CD4-positive, alpha-beta memory T cell (primary cell): ENCODE measurements at regions of chr3 and their contacts with region 1.

Region 1: GRCh38 chr3:36993326-36994283 is at the start of gene MLH1:
- DNase-seq: peak in 4 of 5 donors; percentile 94 to 96 (median 96)
- H3K4me3 ChIP-seq: peak within 1 kb of the TSS; percentile 64 to 97
- H3K4me3 Mint-ChIP-seq: no peak within 1 kb of the TSS
- H3K27ac ChIP-seq: peak within 1 kb of the TSS; percentile 95
- H3K27ac Mint-ChIP-seq: no peak within 1 kb of the TSS
- H3K4me1 ChIP-seq: peaks cover 45% of the 10 kb centered on the region
- H3K4me1 Mint-ChIP-seq: peaks cover 25 to 38% (median 33%) of the 10 kb centered on the region in 4 donors
- H3K27me3 ChIP-seq: no peaks in the 10 kb centered on the region
- H3K27me3 Mint-ChIP-seq: no peaks in the 10 kb centered on the region
- total RNA-seq, gene MLH1: 30.3 to 33.8 TPM

Region 2: GRCh38 chr3:36893137-36893557 is 100.5 kb before region 1 on chr3:
- CTCF ChIA-PET with region 1: interaction called, 3 read pairs
- POLR2A ChIA-PET with region 1: interaction called, 19 read pairs
- intact Hi-C with region 1: no loop called
- DNase-seq: peak; percentile 40 to 85 (median 56)
- H3K4me3 ChIP-seq: no peak overlapping the region
- H3K4me3 Mint-ChIP-seq: peak overlapping the region in 4 of 8 donors; percentile 1 to 65 (median 56)
- H3K27ac ChIP-seq: peak overlapping the region; percentile 43
- H3K27ac Mint-ChIP-seq: peak overlapping the region; percentile 79 to 97 (median 93)
- H3K4me1 ChIP-seq: peaks cover 46% of the 10 kb centered on the region
- H3K4me1 Mint-ChIP-seq: peaks cover 40 to 74% (median 55%) of the 10 kb centered on the region in 4 donors
- H3K27me3 ChIP-seq: no peaks in the 10 kb centered on the region
- H3K27me3 Mint-ChIP-seq: no peaks in the 10 kb centered on the region

Region 3: DNA sequence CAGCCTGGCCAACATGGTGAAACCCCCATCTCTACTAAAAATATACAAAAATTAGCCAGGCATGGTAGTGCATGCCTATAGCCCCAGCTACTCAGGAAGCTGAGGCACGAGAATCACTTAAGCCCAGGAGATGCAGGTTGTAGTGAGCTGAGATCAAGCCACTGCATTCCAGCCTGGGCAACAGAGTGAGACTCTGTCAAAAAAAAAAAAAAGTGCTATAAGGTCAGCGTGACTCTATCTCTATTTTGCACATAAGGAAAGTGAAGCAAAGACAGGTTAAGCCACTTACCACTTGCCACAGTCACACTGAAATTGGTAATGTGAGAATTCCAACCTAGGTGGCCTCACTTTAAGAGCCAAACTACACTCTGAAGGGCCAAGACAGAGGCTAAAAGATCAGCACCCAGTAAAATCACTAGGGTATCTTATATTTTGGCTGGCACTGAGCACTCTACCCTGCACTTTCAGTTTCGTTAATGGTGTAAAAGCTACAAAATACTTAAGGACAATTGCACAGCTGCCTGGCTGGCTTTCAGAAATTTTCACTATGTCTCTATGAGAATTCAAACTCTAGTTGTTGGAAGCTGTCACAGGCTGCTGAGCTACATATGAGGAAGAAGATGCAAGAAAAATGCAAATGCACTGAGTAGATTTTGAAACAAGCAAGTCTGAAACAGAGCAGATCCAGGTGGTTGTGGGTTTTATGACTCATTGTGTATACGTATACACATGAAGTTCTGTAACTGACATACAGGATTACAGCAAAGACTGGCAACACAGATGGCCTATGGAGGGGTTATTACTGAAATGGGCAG is 81.4 kb before region 1 on chr3:
- CTCF ChIA-PET with region 1: interaction called, 18 read pairs
- POLR2A ChIA-PET with region 1: interaction called, 28 read pairs
- intact Hi-C with region 1: loop called (anchors 2 kb)
- DNase-seq: peak; percentile 54 to 84 (median 65)
- H3K4me3 ChIP-seq: peak overlapping the region; percentile 18 to 41
- H3K4me3 Mint-ChIP-seq: peak overlapping the region; percentile 61 to 84 (median 79)
- H3K27ac ChIP-seq: peak overlapping the region; percentile 72
- H3K27ac Mint-ChIP-seq: peak overlapping the region; percentile 66 to 95 (median 84)
- H3K4me1 ChIP-seq: peaks cover 38% of the 10 kb centered on the region
- H3K4me1 Mint-ChIP-seq: peaks cover 24 to 43% (median 33%) of the 10 kb centered on the region in 4 donors
- H3K27me3 ChIP-seq: no peaks in the 10 kb centered on the region
- H3K27me3 Mint-ChIP-seq: no peaks in the 10 kb centered on the region

Region 4: GRCh38 chr3:36969540-36970432 is 23.8 kb before region 1 on chr3:
- CTCF ChIA-PET with region 1: interaction called, 5 read pairs
- POLR2A ChIA-PET with region 1: interaction called, 16 read pairs
- intact Hi-C with region 1: loop called (anchors 2 kb)
- DNase-seq: peak; percentile 43 to 83 (median 57)
- H3K4me3 ChIP-seq: no peak overlapping the region
- H3K4me3 Mint-ChIP-seq: peak overlapping the region in 5 of 8 donors; percentile 4 to 58 (median 29)
- H3K27ac ChIP-seq: peak overlapping the region; percentile 37
- H3K27ac Mint-ChIP-seq: peak overlapping the region; percentile 49 to 94 (median 87)
- H3K4me1 ChIP-seq: peaks cover 24% of the 10 kb centered on the region
- H3K4me1 Mint-ChIP-seq: peaks cover 14 to 31% (median 25%) of the 10 kb centered on the region in 4 donors
- H3K27me3 ChIP-seq: no peaks in the 10 kb centered on the region
- H3K27me3 Mint-ChIP-seq: no peaks in the 10 kb centered on the region

Region 5: DNA sequence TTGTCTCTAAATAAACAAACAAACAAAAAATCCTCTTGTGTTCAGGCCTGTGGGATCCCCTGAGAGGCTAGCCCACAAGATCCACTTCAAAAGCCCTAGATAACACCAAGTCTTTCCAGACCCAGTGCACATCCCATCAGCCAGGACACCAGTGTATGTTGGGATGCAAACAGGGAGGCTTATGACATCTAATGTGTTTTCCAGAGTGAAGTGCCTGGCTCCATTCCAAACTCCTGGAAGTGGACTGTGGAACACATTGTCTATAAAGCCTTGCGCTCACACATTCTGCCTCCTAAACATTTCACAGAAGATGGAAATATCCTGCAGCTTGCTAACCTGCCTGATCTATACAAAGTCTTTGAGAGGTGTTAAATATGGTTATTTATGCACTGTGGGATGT is 56.7 kb after region 1 on chr3:
- CTCF ChIA-PET with region 1: no interaction called
- POLR2A ChIA-PET with region 1: no interaction called
- intact Hi-C with region 1: no loop called
- DNase-seq: no peak
- H3K4me3 ChIP-seq: no peak overlapping the region
- H3K4me3 Mint-ChIP-seq: no peak overlapping the region
- H3K27ac ChIP-seq: no peak overlapping the region
- H3K27ac Mint-ChIP-seq: peak overlapping the region in 2 of 7 donors; percentile 32 to 37
- H3K4me1 ChIP-seq: no peaks in the 10 kb centered on the region
- H3K4me1 Mint-ChIP-seq: peaks cover 0 to 4% (median under 1%) of the 10 kb centered on the region in 4 donors
- H3K27me3 ChIP-seq: no peaks in the 10 kb centered on the region
- H3K27me3 Mint-ChIP-seq: no peaks in the 10 kb centered on the region

Region 6: GRCh38 chr3:37833302-37834186 is 839.9 kb after region 1 on chr3:
- CTCF ChIA-PET with region 1: no interaction called
- POLR2A ChIA-PET with region 1: no interaction called
- intact Hi-C with region 1: no loop called
- DNase-seq: no peak
- H3K4me3 ChIP-seq: no peak overlapping the region
- H3K4me3 Mint-ChIP-seq: no peak overlapping the region
- H3K27ac ChIP-seq: no peak overlapping the region
- H3K27ac Mint-ChIP-seq: no peak overlapping the region
- H3K4me1 ChIP-seq: no peaks in the 10 kb centered on the region
- H3K4me1 Mint-ChIP-seq: no peaks in the 10 kb centered on the region
- H3K27me3 ChIP-seq: no peaks in the 10 kb centered on the region
- H3K27me3 Mint-ChIP-seq: peaks cover 3 to 11% of the 10 kb centered on the region in 2 donors